ENCODE measurements at regions of chr17 and their contacts with region 1.

Region 1: GRCh38 chr17:49836111-49837030 is 11.5 kb downstream of the TAC4 start:
- DNase-seq: peak in 1 of 2 donors; percentile 89
- H3K4me3 ChIP-seq: no peak overlapping the region
- H3K27ac ChIP-seq: peak overlapping the region; percentile 79 to 82
- H3K4me1 ChIP-seq: peaks cover 5 to 28% of the 10 kb centered on the region in 2 donors
- H3K27me3 ChIP-seq: no peaks in the 10 kb centered on the region
- CTCF ChIP-seq: no peak

Region 2: GRCh38 chr17:49676276-49676868 is 160.0 kb before region 1 on chr17:
- intact Hi-C with region 1: no loop called
- DNase-seq: no peak
- H3K4me3 ChIP-seq: peak overlapping the region; percentile 79 to 83
- H3K27ac ChIP-seq: peak overlapping the region; percentile 97 to 98
- H3K4me1 ChIP-seq: peaks cover 5 to 41% of the 10 kb centered on the region in 2 donors
- H3K27me3 ChIP-seq: no peaks in the 10 kb centered on the region
- CTCF ChIP-seq: no peak

Region 3: DNA sequence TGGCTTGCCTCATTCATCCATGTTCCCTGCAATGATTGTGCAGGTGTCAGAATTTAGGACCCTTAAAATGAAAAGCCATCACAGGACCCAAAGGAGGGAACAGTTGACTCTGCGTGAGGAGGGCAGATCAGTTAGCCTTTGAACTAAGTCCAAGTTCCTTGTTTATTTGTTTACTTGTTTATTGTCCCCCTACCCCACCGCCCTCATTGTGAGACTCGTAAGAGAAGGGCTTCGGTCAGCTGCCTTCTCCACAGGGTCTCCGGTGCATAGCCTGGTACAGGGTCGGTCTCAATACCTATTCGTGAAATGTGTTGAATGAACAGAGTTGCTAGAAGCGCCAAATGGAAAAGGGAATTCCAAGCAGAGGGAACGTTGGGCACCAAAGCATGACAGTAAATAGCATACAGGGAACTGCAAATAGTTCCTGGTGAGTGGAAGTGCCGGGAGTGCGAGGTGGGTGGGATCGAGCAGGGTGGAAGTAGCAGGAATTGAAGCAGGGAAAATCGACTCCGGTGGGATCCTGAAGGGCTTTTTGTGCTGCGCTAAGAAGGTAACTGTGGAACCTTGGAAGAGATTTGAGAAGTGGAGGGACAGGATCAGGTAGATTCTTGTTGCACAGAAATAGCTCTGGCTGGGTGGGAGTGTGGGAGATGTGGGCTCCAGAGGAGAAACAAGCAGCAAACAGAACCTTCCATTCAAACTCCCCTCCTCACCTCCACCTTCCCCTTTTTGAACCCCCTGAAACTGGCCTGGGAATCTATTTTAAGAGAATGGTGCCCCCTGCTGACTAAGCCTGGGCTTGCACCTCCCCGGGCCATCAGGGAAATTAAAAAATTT is 141.3 kb before region 1 on chr17:
- intact Hi-C with region 1: no loop called
- DNase-seq: no peak
- H3K4me3 ChIP-seq: peak overlapping the region; percentile 8 to 35
- H3K27ac ChIP-seq: peak overlapping the region; percentile 57 to 65
- H3K4me1 ChIP-seq: peaks cover 3 to 31% of the 10 kb centered on the region in 2 donors
- H3K27me3 ChIP-seq: no peaks in the 10 kb centered on the region
- CTCF ChIP-seq: peak; percentile 92 to 95 (median 95)

Region 4: DNA sequence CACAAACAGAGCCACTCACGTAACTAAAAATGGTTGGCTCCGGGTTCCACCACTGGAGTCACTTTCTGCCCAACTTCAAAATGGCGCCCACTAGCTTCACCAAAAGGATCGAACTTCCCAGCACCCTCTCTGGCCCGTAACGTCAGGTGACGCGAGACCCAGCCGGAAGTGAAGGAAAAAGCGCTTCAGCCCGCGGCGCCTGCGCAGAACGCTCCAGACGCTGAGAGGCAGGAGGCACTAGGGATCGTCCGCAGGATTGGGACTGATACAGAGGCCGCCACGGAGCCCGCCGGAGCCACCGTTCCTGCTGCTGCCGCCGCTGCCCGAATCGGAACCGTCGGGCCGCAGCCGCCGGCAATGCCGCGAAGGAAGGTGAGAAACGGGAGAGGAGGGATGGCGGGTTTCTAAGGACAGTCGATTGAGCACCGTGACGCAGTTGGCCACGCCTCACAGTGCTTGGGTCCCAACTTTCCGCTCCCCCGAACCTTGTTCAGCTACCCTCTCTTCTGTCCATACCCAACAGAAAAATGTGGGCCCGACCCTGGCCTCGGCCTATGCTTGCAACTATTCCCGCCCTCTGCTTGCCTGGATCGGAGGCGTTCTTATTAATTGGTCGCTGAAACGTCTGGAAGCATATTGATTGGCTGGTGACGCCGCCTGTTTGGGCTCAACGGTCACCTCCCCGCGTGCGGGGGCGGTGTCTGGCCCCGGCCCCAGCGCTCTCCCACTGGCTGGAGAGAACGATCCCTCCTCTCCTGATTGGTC is 47.7 kb before region 1 on chr17 and contains the start of gene KAT7:
- intact Hi-C with region 1: loop called (anchors 5 kb)
- DNase-seq: peak; percentile 98 to 99
- H3K4me3 ChIP-seq: peak within 1 kb of the TSS; percentile 93 to 98
- H3K27ac ChIP-seq: peak within 1 kb of the TSS; percentile 100
- H3K4me1 ChIP-seq: peaks cover 10 to 34% of the 10 kb centered on the region in 2 donors
- H3K27me3 ChIP-seq: no peaks in the 10 kb centered on the region
- CTCF ChIP-seq: no peak
- total RNA-seq, gene KAT7: 46.6 TPM